PC-9 (cell line): ENCODE measurements at regions of chr19 and their contacts with region 1.

Region 1: GRCh38 chr19:51742789-51743188 is 8.9 kb downstream of the FPR1 start:
- DNase-seq: no peak
- H3K4me3 ChIP-seq: no peak overlapping the region
- H3K27ac ChIP-seq: no peak overlapping the region
- H3K4me1 ChIP-seq: no peaks in the 10 kb centered on the region
- H3K27me3 ChIP-seq: peaks cover 87% of the 10 kb centered on the region
- CTCF ChIP-seq: no peak

Region 2: GRCh38 chr19:51525686-51526085 is 217.1 kb before region 1 on chr19:
- CTCF ChIA-PET with region 1: no interaction called
- POLR2A ChIA-PET with region 1: no interaction called
- intact Hi-C with region 1: no loop called
- DNase-seq: no peak
- H3K4me3 ChIP-seq: no peak overlapping the region
- H3K27ac ChIP-seq: no peak overlapping the region
- H3K4me1 ChIP-seq: no peaks in the 10 kb centered on the region
- H3K27me3 ChIP-seq: peaks cover 96% of the 10 kb centered on the region
- CTCF ChIP-seq: no peak

Region 3: DNA sequence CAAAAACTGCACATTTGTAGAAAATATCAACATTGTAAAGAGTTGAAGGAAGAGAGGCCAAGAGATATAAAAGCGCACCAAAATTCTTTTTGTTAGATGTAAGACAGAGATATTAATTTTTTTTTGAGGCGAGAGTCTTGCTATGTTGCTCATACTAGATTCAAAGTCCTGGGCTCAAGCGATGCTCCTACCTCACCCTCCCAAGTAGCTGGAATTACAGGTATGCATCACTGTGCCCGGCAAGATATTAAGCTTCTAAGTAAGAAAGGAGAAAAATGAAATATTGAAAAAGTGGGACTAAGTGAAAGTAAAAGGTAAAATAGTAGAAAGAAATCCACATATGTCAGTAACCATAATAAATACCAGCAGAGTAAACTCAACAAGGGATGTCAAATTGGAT is 124.9 kb before region 1 on chr19:
- CTCF ChIA-PET with region 1: interaction called, 16 read pairs
- POLR2A ChIA-PET with region 1: no interaction called
- intact Hi-C with region 1: no loop called
- DNase-seq: no peak
- H3K4me3 ChIP-seq: no peak overlapping the region
- H3K27ac ChIP-seq: no peak overlapping the region
- H3K4me1 ChIP-seq: no peaks in the 10 kb centered on the region
- H3K27me3 ChIP-seq: peaks cover 90% of the 10 kb centered on the region
- CTCF ChIP-seq: no peak

Region 4: GRCh38 chr19:51668216-51668615 is 74.6 kb before region 1 on chr19:
- CTCF ChIA-PET with region 1: no interaction called
- POLR2A ChIA-PET with region 1: no interaction called
- intact Hi-C with region 1: no loop called
- DNase-seq: no peak
- H3K4me3 ChIP-seq: no peak overlapping the region
- H3K27ac ChIP-seq: no peak overlapping the region
- H3K4me1 ChIP-seq: no peaks in the 10 kb centered on the region
- H3K27me3 ChIP-seq: peaks cover 26% of the 10 kb centered on the region
- CTCF ChIP-seq: no peak